GM12878 (cell line): ENCODE measurements at regions of chr10 and their contacts with region 1.

Region 1: GRCh38 chr10:31004611-31005193 is 27.0 kb downstream of the ZNF438 start:
- DNase-seq: no peak
- ATAC-seq: peak; percentile 43
- H3K4me3 ChIP-seq: no peak overlapping the region
- H3K27ac ChIP-seq: no peak overlapping the region
- H3K4me1 ChIP-seq: peaks cover 5% of the 10 kb centered on the region
- H3K27me3 ChIP-seq: no peaks in the 10 kb centered on the region
- CTCF ChIP-seq: no peak
- EP300 ChIP-seq: peak in 1 of 2 experiments; percentile 72; a peak in 1 of 4 replicates
- POLR2A ChIP-seq: no peak
- RAD21 ChIP-seq: no peak

Region 2: DNA sequence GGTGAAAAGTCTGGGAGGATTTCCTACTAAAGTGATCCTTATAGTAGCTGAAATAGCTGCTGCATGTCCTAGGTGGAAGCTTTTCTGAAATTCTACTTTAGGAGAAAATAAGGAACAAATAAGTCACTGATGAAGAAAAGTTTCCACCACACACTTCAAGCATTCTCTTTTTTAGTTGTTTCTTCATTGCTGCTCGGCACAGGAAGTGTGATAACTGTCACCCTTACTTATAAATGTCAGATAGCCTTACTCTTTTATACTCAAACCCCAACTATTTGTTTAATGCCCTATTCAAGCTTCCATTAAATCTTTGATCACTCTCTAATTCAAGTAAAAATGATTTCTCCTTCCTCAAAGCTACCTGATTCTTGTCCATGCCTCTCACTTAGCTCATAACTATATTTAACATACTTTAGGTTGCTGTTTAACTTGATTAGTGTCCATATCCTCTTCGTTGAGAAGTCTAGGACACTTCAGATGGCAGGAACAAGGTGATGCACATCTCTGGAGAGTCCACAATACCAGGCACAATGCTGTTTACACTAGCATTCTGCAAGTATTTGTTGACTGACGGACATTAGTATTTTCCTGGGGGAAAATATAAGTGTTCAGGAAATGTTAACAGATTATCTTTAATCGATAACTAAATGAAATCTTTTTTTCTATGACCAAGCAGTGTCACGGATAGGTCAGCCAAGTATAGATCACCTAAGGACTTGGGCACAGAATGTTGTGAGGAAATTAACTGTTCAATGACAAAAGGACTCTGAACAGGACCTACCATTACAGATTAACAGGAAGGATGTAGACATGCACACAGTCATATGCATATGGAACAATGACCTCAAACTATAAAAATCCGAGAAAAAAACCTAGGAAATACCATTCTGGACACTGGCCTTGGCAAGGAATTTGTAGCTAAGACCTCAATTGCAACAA is 40.4 kb before region 1 on chr10:
- CTCF ChIA-PET with region 1: no interaction called
- POLR2A ChIA-PET with region 1: no interaction called
- RAD21 ChIA-PET with region 1: no interaction called
- SMC1A ChIA-PET with region 1: no interaction called
- in situ Hi-C with region 1: no loop called
- intact Hi-C with region 1: loop called (anchors 2 kb)
- DNase-seq: no peak
- ATAC-seq: no peak
- H3K4me3 ChIP-seq: no peak overlapping the region
- H3K27ac ChIP-seq: no peak overlapping the region
- H3K4me1 ChIP-seq: no peaks in the 10 kb centered on the region
- H3K27me3 ChIP-seq: no peaks in the 10 kb centered on the region
- CTCF ChIP-seq: no peak
- EP300 ChIP-seq: no peak
- POLR2A ChIP-seq: no peak
- RAD21 ChIP-seq: no peak

Region 3: GRCh38 chr10:31018962-31019361 is 14.3 kb after region 1 on chr10:
- CTCF ChIA-PET with region 1: interaction called, 5 read pairs
- POLR2A ChIA-PET with region 1: no interaction called
- RAD21 ChIA-PET with region 1: interaction called, 4 read pairs
- SMC1A ChIA-PET with region 1: interaction called, 10 read pairs
- in situ Hi-C with region 1: no loop called
- intact Hi-C with region 1: no loop called
- DNase-seq: no peak
- ATAC-seq: no peak
- H3K4me3 ChIP-seq: no peak overlapping the region
- H3K27ac ChIP-seq: no peak overlapping the region
- H3K4me1 ChIP-seq: peaks cover 7% of the 10 kb centered on the region; the same call in 1 of the 2 replicates
- H3K27me3 ChIP-seq: no peaks in the 10 kb centered on the region
- CTCF ChIP-seq: no peak
- EP300 ChIP-seq: no peak
- POLR2A ChIP-seq: no peak
- RAD21 ChIP-seq: no peak